ENCODE measurements at regions of chr2 and their contacts with region 1.

Region 1: GRCh38 chr2:42047488-42048298 is at the start of gene PKDCC:
- DNase-seq: peak; percentile 83
- H3K4me3 ChIP-seq: peak within 1 kb of the TSS; percentile 49
- H3K27ac ChIP-seq: peak within 1 kb of the TSS; percentile 83
- H3K4me1 ChIP-seq: no peaks in the 10 kb centered on the region
- H3K27me3 ChIP-seq: no peaks in the 10 kb centered on the region
- CTCF ChIP-seq: no peak
- total RNA-seq, gene PKDCC: 61.3 to 125 TPM

Region 2: GRCh38 chr2:41750829-41751228 is 296.9 kb before region 1 on chr2:
- intact Hi-C with region 1: no loop called
- DNase-seq: no peak
- H3K4me3 ChIP-seq: no peak overlapping the region
- H3K27ac ChIP-seq: no peak overlapping the region
- H3K4me1 ChIP-seq: no peaks in the 10 kb centered on the region
- H3K27me3 ChIP-seq: no peaks in the 10 kb centered on the region
- CTCF ChIP-seq: no peak

Region 3: DNA sequence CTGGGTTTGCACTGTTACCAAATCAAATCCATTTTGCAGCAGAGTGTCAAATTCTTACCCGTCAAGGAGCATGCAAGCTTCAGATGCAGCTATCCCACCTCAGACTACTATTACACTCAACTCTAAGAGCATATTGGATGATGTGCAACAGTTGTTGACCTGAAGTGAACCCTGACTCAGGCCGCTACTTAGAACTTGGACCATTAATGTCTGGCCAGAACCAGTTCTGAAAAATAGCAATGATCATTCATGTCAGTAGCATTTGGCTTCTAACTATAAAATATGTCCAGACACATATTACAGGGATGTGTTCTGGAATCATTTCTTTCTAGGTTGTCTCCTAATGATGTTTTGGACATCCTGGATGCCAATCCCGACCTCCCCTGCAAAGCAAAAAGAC is 135.4 kb before region 1 on chr2:
- intact Hi-C with region 1: no loop called
- DNase-seq: no peak
- H3K4me3 ChIP-seq: no peak overlapping the region
- H3K27ac ChIP-seq: no peak overlapping the region
- H3K4me1 ChIP-seq: no peaks in the 10 kb centered on the region
- H3K27me3 ChIP-seq: no peaks in the 10 kb centered on the region
- CTCF ChIP-seq: no peak

Region 4: DNA sequence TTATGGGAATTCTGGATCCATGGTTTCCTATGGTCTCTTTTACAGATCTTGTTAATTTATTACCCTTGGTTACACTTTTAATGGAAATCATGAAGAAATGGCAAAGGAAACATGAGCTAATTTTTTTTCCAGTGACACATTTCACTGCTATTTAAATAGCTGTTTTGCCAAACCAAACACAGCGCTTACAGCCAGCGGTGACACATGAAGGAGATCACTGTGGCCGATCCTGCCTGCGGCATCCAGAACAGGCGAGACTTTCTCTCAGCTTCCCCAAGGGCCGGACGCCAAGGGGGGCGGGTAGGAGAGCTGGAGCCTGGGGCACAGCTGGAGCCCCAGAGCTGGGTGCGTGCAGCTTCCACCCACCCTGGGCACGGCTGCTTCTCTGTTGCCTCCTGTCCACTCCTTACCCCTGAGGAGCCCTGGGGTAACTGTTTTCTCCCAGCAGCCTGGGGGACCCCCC is 81.2 kb before region 1 on chr2:
- intact Hi-C with region 1: loop called (anchors 10 kb)
- DNase-seq: peak; percentile 83
- H3K4me3 ChIP-seq: no peak overlapping the region
- H3K27ac ChIP-seq: peak overlapping the region; percentile 25
- H3K4me1 ChIP-seq: peaks cover 21% of the 10 kb centered on the region
- H3K27me3 ChIP-seq: no peaks in the 10 kb centered on the region
- CTCF ChIP-seq: no peak

Region 5: GRCh38 chr2:42010810-42011209 is 36.9 kb before region 1 on chr2:
- intact Hi-C with region 1: no loop called
- DNase-seq: no peak
- H3K4me3 ChIP-seq: no peak overlapping the region
- H3K27ac ChIP-seq: no peak overlapping the region
- H3K4me1 ChIP-seq: no peaks in the 10 kb centered on the region
- H3K27me3 ChIP-seq: no peaks in the 10 kb centered on the region
- CTCF ChIP-seq: no peak

Region 6: DNA sequence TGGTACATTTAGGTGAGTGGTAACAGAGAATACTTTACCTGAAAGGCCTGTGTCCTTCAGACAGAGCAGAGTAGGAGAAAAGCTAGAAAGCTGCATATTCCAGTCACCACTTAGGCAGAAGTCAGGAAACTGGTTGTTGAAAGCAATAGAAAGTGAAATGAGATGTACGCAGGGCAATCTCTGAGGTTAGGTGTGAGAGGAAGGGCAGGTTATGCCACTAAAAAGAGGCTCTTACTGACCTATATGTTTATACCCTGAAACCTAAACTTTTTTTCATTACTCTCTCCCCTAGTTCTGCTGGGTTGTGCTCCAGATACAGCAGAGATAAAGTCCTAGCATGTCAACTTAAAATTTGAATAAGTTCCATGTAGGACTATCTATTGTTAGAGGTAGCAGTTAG is 219.8 kb after region 1 on chr2:
- intact Hi-C with region 1: no loop called
- DNase-seq: no peak
- H3K4me3 ChIP-seq: no peak overlapping the region
- H3K27ac ChIP-seq: no peak overlapping the region
- H3K4me1 ChIP-seq: no peaks in the 10 kb centered on the region
- H3K27me3 ChIP-seq: no peaks in the 10 kb centered on the region
- CTCF ChIP-seq: no peak

Measured in colonic mucosa (tissue), 4 donors.